Right ventricle myocardium superior (tissue), 1 donor: ENCODE measurements at regions of chr7 and their contacts with region 1.

Region 1: DNA sequence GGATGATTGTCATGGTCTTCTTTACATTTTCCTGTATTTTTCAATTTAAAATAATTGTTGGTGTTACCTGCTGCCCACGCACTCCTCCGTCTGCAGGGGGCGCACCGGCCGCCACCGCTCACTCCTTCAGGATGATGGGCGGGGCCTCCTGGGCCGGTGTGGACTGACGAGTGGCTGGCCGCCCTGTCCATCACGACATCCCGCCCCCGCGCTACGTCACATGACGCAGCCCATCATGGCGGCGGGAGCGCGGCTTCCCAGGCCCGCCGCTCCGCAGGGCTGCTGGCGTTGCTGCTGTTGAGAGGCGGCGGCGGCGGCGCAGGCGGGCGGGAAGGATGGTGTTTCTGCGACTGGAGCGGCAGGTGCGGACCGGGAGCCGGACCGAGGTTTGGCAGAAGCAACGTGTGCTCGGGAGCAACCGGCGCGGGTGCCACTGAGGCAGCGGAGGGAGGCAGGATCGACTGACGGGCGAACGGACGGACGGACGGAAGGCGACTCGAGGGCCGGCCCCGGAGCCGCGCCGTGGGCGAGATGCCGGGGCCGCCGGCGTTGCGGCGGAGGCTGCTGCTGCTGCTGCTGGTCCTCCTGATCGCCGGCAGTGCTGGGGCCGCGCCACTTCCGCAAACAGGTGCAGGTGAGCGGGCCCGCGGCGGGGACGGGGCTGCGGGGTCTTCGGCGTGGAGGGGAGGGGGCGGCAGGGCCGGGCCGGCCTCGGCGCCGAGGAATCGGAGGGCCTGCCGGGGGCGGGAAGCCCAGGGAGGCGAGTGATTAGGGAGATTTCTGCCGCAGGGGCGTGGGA is at the start of gene LMTK2:
- DNase-seq: peak; percentile 97
- ATAC-seq: peak; percentile 99
- total RNA-seq, gene LMTK2: 20.3 TPM

Region 2: DNA sequence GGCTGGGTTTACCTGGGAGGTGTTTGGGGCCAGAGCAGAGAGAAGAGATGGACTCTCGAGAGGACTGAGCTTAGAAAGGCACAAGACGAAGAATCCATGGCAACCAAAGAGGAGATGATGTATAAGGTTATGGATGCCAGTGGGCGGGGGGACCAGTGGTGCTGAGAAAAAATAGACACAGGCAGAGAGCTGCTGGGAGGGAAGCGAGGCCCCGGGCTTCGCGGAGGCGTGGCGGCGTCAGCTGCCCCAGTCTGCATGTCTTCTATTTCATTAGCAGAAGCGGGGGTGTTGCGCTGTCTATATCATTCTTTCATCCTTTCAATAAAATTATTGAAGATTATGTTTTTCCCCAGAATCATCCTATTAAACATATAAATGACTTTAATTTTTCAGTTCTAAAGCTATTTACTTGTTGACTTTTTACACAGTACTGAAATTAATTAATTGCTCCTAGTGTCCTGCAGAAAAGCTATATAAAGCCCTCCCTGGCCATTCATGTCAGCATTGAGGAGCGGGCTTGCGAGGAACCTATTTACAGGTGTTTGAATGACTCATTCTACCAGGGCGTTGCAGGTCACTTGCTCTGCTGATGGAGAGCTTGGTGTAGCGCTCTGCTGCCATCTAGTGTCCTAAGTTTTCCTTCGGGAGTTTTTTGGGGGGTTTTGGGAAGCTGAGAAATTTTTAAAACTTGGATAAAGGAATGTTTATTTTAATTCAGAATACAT is 61.5 kb after region 1 on chr7:
- intact Hi-C with region 1: loop called (anchors 1 kb)
- DNase-seq: no peak
- ATAC-seq: peak; percentile 79

Region 3: DNA sequence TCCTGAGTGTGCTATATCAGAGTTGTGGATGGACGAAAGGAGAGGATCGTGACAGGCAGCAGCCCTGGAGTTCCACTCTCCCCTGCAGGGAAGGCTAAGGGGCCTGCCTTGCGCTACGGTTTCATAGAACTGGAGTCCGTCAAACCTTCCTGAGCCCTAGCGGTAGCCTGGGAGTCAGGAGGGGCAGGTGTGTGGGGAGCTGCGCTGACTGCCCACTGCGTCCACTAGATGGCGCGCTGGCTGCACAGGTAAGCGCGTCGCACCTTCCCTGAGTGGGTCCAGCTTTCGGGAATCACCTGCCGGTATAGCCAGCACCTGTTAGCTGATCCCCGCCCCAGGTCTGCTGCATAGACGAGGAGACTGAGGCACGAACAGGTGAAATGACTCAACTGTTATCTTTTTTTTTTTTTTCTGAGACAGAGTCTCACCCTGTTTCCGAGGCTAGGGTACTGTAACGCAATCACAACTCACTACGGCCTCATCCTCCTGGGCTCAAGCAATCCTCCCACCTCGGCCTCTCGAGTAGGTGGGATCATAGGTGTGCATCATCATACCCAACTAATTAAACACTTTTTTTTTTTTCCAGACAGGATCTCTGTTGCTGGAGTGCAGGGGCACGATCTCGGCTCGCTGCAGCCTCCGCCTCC is 314.2 kb after region 1 on chr7:
- intact Hi-C with region 1: no loop called
- DNase-seq: peak; percentile 64
- ATAC-seq: peak; percentile 74